AG04450 (cell line): ENCODE measurements at regions of chr19 and their contacts with region 1.

Region 1: DNA sequence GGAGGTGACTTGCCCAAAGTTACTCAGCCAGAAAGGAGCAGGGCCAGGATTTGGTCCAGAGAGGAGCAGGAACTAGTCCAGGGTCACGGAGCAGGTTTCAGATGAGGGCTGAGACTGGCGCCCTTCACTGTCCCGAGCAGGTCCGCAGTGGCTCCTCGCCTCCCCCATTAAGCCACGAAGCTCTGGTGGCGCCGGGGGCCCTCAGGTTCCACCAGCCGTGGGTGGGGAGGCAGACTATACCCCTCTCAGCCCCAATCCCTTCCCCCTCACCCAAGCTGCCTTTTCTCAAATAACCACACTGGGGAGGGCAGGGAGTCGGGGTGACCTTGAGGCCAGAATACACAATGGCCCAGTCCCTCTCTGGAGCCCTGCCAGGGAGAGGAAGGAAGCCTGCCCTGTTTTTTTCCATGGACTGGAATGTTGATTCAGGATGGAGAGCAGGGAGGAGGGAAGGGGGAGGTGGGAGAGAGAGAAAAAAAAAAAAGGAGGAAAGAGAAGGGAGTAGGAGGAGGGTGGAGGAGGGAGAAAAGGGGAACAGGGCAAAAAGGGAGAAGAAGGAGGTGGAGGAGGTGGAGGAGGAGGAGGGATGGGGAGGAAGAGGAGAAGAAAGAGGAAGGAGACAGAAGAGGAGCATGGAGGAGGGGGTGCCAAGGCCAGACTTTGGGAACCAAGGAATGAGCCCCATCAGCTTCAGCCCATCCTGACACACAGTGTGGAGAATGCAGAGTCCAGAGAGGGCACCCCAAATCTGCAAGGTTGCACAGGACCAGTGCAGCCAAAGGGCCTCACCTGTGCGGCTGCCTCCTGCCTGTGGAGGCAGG is 19.7 kb downstream of the CEACAM16 start:
- DNase-seq: peak; percentile 7
- H3K4me3 ChIP-seq: no peak overlapping the region
- H3K27ac ChIP-seq: no peak overlapping the region
- H3K27me3 ChIP-seq: no peaks in the 10 kb centered on the region
- CTCF ChIP-seq: no peak

Region 2: GRCh38 chr19:44608391-44608821 is 110.2 kb before region 1 on chr19:
- CTCF ChIA-PET with region 1: no interaction called
- POLR2A ChIA-PET with region 1: no interaction called
- DNase-seq: no peak
- H3K4me3 ChIP-seq: no peak overlapping the region
- H3K27ac ChIP-seq: peak overlapping the region; percentile 68
- H3K27me3 ChIP-seq: no peaks in the 10 kb centered on the region
- CTCF ChIP-seq: no peak

Region 3: DNA sequence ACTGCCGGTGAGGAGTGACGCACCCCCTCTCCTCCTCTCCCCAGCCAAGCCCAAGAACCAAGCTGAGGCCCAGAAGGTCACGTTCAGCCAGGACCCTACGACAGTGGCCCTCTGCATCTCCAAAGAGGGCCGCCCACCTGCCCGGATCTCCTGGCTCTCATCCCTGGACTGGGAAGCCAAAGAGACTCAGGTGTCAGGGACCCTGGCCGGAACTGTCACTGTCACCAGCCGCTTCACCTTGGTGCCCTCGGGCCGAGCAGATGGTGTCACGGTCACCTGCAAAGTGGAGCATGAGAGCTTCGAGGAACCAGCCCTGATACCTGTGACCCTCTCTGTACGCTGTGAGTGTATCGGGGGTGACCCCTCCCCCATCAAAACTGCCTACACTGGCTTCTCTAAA is 153.2 kb after region 1 on chr19:
- CTCF ChIA-PET with region 1: interaction called, 4 read pairs
- POLR2A ChIA-PET with region 1: interaction called, 13 read pairs
- DNase-seq: no peak
- H3K4me3 ChIP-seq: no peak overlapping the region
- H3K27ac ChIP-seq: no peak overlapping the region
- H3K27me3 ChIP-seq: no peaks in the 10 kb centered on the region
- CTCF ChIP-seq: no peak